ENCODE measurements at regions of chr11 and their contacts with region 1.

Region 1: GRCh38 chr11:4094348-4095291 is at the start of gene RRM1:
- ATAC-seq: peak; percentile 94 to 99 (median 99)
- H3K4me3 ChIP-seq: peak within 1 kb of the TSS; percentile 58 to 88 (median 79)
- H3K27ac ChIP-seq: peak within 1 kb of the TSS; percentile 92 to 95
- H3K4me1 ChIP-seq: peaks cover 10% of the 10 kb centered on the region in 2 donors
- total RNA-seq, gene RRM1: 8.7 to 104 (median 38.4) TPM

Region 2: GRCh38 chr11:3841426-3842350 is 252.9 kb before region 1 on chr11:
- in situ Hi-C with region 1: loop called in 1 of 9 experiments (anchors 25 kb)
- ATAC-seq: peak; percentile 50 to 74 (median 71)
- H3K4me3 ChIP-seq: peak overlapping the region; percentile 58 to 95 (median 92)
- H3K27ac ChIP-seq: peak overlapping the region; percentile 38 to 86
- H3K4me1 ChIP-seq: peaks cover 8 to 22% of the 10 kb centered on the region in 2 donors

Region 3: GRCh38 chr11:3854977-3855807 is 239.4 kb before region 1 on chr11 and contains the start of gene STIM1:
- in situ Hi-C with region 1: loop called in 1 of 9 experiments (anchors 25 kb)
- ATAC-seq: peak; percentile 82 to 94 (median 92)
- H3K4me3 ChIP-seq: peak within 1 kb of the TSS; percentile 58 to 98 (median 65)
- H3K27ac ChIP-seq: peak within 1 kb of the TSS; percentile 34 to 76
- H3K4me1 ChIP-seq: peaks cover 27 to 37% of the 10 kb centered on the region in 2 donors
- total RNA-seq, gene STIM1: 6.2 to 47.3 (median 10.2) TPM

Region 4: DNA sequence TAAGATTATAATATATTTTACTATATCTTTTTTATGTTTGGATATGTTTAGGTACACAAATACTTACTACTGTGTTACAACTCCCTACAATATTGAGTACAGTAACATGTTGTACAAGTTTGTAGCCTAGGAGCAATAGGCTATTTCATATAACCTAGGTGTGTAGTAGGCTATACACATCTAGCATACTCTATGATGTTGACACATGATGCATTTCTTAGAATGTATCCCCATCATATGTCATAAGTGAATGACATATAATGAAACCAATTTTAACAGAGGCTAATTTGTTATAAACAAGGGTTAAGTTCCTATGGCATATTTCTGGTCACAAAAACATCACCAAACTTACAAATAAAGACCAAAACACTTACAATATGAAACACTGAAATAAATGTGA is 86.5 kb before region 1 on chr11:
- in situ Hi-C with region 1: no loop called
- ATAC-seq: no peak
- H3K4me3 ChIP-seq: no peak overlapping the region
- H3K27ac ChIP-seq: no peak overlapping the region
- H3K4me1 ChIP-seq: no peaks in the 10 kb centered on the region